ENCODE measurements at regions of chr10 and their contacts with region 1.

Region 1: DNA sequence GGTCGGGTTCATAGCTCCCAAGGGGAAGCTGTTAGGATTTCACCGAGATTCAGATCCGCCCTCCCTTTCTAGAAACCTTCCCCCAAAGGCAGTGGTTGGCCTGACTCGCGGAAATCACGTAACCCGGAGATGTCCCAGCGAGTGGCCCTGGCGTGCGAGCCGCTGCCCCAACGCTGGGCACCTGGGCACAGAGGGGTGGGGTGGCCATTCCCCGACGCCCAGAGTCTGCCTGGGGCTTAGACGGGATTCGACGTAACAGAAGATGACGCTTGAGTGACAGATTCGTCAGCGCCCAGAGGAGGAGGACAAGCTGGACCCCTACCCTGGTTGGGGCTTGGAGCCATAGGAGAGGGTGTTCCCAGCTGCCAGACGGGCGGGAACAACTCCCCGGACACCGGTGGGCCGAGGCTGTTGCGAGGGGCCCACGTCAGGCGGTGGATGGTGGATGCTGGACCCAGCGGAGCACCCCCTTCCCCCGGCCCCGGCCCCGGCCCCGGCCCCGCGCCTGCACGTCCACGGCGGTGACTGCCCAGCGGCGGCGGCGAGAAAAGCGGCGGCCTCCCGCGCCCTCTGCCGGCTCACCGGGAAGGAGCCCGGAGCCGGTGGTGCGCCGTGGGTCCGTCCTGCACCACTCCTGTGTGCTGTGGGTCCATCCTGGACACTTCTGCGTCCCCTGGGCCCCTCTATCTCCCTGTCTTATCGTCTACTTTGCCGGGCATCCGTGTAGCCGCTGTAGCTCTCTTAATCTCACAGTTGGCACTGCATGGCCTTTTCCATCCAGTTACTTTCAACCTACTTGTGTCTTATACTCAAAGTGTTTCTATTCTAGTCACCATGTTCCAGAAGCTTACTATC is 35.4 kb upstream of the KNDC1 start:
- DNase-seq: peak in 5 of 7 donors; percentile 29 to 60 (median 46)
- H3K4me3 ChIP-seq: no peak overlapping the region
- H3K27ac ChIP-seq: no peak overlapping the region
- H3K4me1 ChIP-seq: no peaks in the 10 kb centered on the region
- H3K27me3 ChIP-seq: peaks cover 12% of the 10 kb centered on the region
- CTCF ChIP-seq: peak; percentile 21 to 77 (median 54)
- POLR2A ChIP-seq: no peak

Region 2: GRCh38 chr10:132836832-132837540 is 287.6 kb before region 1 on chr10:
- intact Hi-C with region 1: loop called in 1 of 2 experiments (anchors 5 kb)
- DNase-seq: peak in 6 of 7 donors; percentile 22 to 53 (median 32)
- H3K4me3 ChIP-seq: no peak overlapping the region
- H3K27ac ChIP-seq: no peak overlapping the region
- H3K4me1 ChIP-seq: no peaks in the 10 kb centered on the region
- H3K27me3 ChIP-seq: peaks cover 20% of the 10 kb centered on the region
- CTCF ChIP-seq: peak; percentile 69 to 95 (median 80)
- POLR2A ChIP-seq: no peak

Region 3: DNA sequence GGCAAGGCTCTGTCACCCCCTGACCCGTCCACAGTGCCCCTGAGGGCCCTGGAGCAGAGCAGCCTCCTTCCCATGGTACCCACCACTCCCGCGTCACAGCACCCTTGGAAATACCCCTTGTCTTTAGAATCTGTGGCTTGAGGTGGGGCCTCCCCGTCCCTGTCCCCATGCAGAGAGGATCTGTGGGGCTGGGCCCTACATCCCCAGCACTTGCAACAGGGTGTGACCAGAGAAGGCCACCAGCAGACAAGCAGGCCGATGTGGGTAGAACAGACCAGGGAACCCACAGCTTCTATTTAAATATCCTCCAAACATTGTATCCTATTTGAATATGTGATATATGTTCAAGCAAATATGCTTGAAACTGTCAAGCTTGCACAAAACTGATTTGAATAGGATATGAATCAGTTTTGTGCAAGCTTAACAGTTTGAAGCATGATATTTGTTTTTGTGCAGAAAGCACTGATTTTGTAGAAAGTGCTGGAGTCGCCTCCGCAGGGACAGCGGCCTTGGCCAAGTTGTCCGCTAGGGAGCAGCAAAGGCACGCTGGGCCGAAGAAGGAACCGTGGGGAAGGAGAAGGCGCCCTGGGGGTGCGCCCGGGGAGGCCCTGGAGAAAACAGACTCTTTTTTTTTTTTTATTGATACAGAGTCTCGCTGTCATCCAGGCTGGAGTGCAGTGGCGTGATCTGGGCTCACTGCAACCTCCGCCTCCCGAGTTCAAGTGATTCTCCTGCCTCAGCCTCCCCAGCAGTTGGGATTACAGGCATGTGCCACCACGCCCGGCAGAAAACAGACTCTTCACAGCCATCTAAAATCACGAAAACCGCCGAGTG is 184.4 kb before region 1 on chr10:
- intact Hi-C with region 1: loop called (anchors 2 to 5 kb)
- DNase-seq: peak; percentile 45 to 77 (median 54)
- H3K4me3 ChIP-seq: no peak overlapping the region
- H3K27ac ChIP-seq: no peak overlapping the region
- H3K4me1 ChIP-seq: peaks cover 0 to 12% of the 10 kb centered on the region in 2 donors
- H3K27me3 ChIP-seq: peaks cover 40% of the 10 kb centered on the region
- CTCF ChIP-seq: peak; percentile 44 to 80 (median 70)
- POLR2A ChIP-seq: no peak